ENCODE measurements at regions of chr2 and their contacts with region 1.

Region 1: GRCh38 chr2:128736689-128737545 is 418.2 kb upstream of the HS6ST1 start:
- DNase-seq: peak; percentile 93
- H3K4me3 ChIP-seq: peak overlapping the region; percentile 37 to 45 (median 44)
- H3K27ac ChIP-seq: no peak overlapping the region
- H3K4me1 ChIP-seq: peaks cover 27 to 37% (median 32%) of the 10 kb centered on the region in 4 donors
- H3K27me3 ChIP-seq: peaks cover 0 to 29% (median 0%) of the 10 kb centered on the region in 4 donors
- CTCF ChIP-seq: peak in 2 of 3 experiments; percentile 90 to 96
- EP300 ChIP-seq: no peak
- POLR2A ChIP-seq: no peak

Region 2: GRCh38 chr2:128774320-128775216 is 37.7 kb after region 1 on chr2:
- intact Hi-C with region 1: no loop called
- DNase-seq: no peak
- H3K4me3 ChIP-seq: no peak overlapping the region
- H3K27ac ChIP-seq: no peak overlapping the region
- H3K4me1 ChIP-seq: peaks cover 0 to 13% (median 0%) of the 10 kb centered on the region in 4 donors
- H3K27me3 ChIP-seq: no peaks in the 10 kb centered on the region
- CTCF ChIP-seq: no peak
- EP300 ChIP-seq: no peak
- POLR2A ChIP-seq: no peak

Region 3: GRCh38 chr2:129396980-129397599 is 660.2 kb after region 1 on chr2:
- intact Hi-C with region 1: loop called (anchors 5 kb)
- DNase-seq: no peak
- H3K4me3 ChIP-seq: no peak overlapping the region
- H3K27ac ChIP-seq: no peak overlapping the region
- H3K4me1 ChIP-seq: no peaks in the 10 kb centered on the region
- H3K27me3 ChIP-seq: no peaks in the 10 kb centered on the region
- CTCF ChIP-seq: peak; percentile 64 to 70 (median 64)
- EP300 ChIP-seq: no peak
- POLR2A ChIP-seq: no peak

Region 4: DNA sequence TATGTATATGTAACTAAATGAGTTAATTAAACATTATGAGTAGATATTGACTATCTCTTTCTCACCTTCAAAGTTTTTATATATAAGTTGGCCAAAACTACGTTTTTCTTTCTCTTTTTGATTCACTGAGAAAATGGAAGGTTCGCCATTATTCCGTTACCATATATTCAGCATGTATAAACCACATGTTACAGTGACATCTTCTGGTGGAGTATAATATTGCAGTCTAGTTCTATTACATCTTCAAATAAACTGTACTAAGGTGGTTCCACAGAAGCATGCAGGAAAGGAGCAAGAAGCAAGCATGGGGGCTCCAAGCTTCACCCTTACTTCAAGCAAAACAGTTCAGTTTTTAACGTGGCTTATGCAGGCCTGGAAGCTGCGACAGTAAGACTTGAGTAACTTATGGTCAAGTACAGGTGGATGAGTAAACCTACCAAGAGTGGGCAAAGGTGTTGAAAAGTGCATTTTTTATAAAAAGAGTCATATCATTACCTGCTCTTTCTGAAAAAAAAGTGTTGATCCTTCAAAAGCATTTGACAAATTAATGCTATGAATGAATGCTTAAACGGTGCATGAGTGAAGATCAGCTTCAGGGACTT is 1112.7 kb after region 1 on chr2:
- intact Hi-C with region 1: loop called (anchors 10 kb)
- DNase-seq: no peak
- H3K4me3 ChIP-seq: no peak overlapping the region
- H3K27ac ChIP-seq: no peak overlapping the region
- H3K4me1 ChIP-seq: no peaks in the 10 kb centered on the region
- H3K27me3 ChIP-seq: no peaks in the 10 kb centered on the region
- CTCF ChIP-seq: peak; percentile 68 to 76 (median 73)
- EP300 ChIP-seq: no peak
- POLR2A ChIP-seq: no peak